PC-3 (cell line): ENCODE measurements at regions of chr3 and their contacts with region 1.

Region 1: DNA sequence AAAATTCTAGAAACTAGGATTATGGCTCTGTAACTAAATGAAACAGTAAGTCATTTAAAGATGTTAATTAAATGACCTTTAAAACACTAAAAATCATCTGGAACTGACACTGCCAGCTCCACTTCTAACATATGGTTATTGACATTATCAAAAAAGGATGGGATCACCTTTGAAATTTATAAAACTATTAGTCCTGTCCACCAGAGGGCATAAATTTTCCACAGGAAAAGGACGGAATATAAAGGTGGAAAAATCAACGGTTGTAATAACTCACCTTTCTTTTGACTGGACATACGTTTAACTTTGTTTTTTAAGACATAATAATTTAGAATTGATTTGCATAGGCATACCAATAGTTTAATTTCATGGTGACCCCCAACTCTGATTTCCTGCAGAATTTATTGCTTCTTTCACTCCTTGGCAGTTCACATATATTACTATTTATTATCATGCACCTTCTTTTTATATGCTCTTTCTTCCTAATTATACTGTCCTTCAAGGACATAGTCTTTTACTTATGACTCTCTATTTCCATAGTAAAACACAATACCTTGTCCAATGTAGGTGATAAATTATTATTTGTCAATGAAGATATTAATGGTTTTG is 345.7 kb downstream of the CADM2 start:
- DNase-seq: peak; percentile 70
- ATAC-seq: peak; percentile 62
- H3K4me3 ChIP-seq: no peak overlapping the region
- H3K27ac ChIP-seq: no peak overlapping the region
- H3K4me1 ChIP-seq: no peaks in the 10 kb centered on the region
- H3K27me3 ChIP-seq: no peaks in the 10 kb centered on the region
- CTCF ChIP-seq: peak; percentile 77

Region 2: DNA sequence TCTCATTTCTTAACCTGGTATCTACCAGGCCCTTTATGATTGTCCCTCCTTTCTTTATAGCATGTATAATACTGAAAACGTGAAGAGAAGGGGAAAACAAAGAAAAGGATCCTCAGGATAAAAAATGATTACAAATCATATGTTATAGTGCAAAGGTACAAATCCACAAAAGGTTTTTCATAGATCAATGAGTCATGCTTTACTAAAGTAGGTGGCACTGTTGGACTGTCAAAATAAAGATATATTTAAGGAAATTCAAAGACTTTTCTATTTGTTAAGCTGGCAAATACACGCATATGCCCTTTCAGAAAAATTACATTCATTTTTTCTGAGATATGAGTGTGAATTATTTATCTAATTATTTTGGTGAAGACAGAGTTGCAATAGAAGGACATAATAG is 194.1 kb before region 1 on chr3:
- CTCF ChIA-PET with region 1: no interaction called
- POLR2A ChIA-PET with region 1: no interaction called
- intact Hi-C with region 1: loop called (anchors 2 kb)
- DNase-seq: peak; percentile 24
- ATAC-seq: peak; percentile 77
- H3K4me3 ChIP-seq: no peak overlapping the region
- H3K27ac ChIP-seq: no peak overlapping the region
- H3K4me1 ChIP-seq: no peaks in the 10 kb centered on the region
- H3K27me3 ChIP-seq: no peaks in the 10 kb centered on the region
- CTCF ChIP-seq: peak; percentile 57

Region 3: DNA sequence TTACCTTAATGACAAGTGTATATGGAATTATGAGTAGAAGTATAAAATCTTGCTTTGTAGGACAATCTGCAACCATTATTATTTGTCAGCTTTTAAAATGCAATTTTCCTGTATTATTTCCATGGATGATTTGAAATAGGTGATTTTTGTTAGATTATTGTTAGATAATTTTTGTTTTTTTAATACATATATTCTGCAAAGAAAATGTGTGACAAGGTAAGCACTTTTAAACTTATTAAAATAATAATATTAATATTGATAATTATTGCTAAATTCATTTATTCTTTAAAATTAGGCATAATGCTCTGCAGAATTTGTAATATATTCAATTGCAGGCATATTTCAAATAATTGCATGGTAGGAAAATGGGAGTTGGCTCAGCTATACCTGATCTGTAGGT is 16.2 kb before region 1 on chr3:
- CTCF ChIA-PET with region 1: no interaction called
- POLR2A ChIA-PET with region 1: no interaction called
- intact Hi-C with region 1: no loop called
- DNase-seq: no peak
- ATAC-seq: no peak
- H3K4me3 ChIP-seq: no peak overlapping the region
- H3K27ac ChIP-seq: no peak overlapping the region
- H3K4me1 ChIP-seq: no peaks in the 10 kb centered on the region
- H3K27me3 ChIP-seq: no peaks in the 10 kb centered on the region
- CTCF ChIP-seq: no peak

Region 4: DNA sequence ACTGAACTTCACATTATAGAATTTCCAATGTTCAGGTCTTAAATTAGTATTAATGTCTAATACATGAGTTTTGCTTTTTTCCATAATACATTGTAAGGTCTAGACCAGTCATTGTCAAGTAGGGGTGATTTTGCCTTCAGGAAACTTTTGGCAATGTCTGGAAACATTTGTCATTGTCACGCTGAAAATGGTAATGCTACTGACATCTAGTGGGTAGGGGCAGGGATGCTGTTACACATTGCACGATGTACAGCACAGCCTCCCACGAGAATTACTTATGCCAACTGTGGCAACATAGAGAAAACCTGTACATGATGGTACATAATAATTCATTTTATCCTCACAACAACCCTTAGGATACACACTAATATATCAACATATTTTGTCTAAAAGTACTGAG is 38.5 kb after region 1 on chr3:
- CTCF ChIA-PET with region 1: no interaction called
- POLR2A ChIA-PET with region 1: interaction called, 4 read pairs
- intact Hi-C with region 1: loop called (anchors 1 kb)
- DNase-seq: peak; percentile 69
- ATAC-seq: peak; percentile 87
- H3K4me3 ChIP-seq: no peak overlapping the region
- H3K27ac ChIP-seq: no peak overlapping the region
- H3K4me1 ChIP-seq: peaks cover 13% of the 10 kb centered on the region
- H3K27me3 ChIP-seq: no peaks in the 10 kb centered on the region
- CTCF ChIP-seq: peak; percentile 87

Region 5: GRCh38 chr3:85576091-85576690 is 271.7 kb after region 1 on chr3:
- CTCF ChIA-PET with region 1: interaction called, 3 read pairs
- POLR2A ChIA-PET with region 1: no interaction called
- intact Hi-C with region 1: loop called (anchors 1 kb)
- DNase-seq: peak; percentile 85
- ATAC-seq: 0 out of 2 replicates have a peak, but pooled peaks have one; percentile 56
- H3K4me3 ChIP-seq: no peak overlapping the region
- H3K27ac ChIP-seq: no peak overlapping the region
- H3K4me1 ChIP-seq: no peaks in the 10 kb centered on the region
- H3K27me3 ChIP-seq: no peaks in the 10 kb centered on the region
- CTCF ChIP-seq: peak; percentile 87